Naive thymus-derived CD4-positive, alpha-beta T cell (primary cell): ENCODE measurements at regions of chr21 and their contacts with region 1.

Region 1: GRCh38 chr21:25999921-26000582 is 170.5 kb downstream of the APP start:
- DNase-seq: peak in 8 of 9 donors; percentile 16 to 64 (median 40)
- ATAC-seq: peak; percentile 82
- H3K4me3 ChIP-seq: peak overlapping the region; percentile 12
- H3K4me3 Mint-ChIP-seq: peak overlapping the region; percentile 43 to 73 (median 61)
- H3K27ac ChIP-seq: no peak overlapping the region
- H3K27ac Mint-ChIP-seq: peak overlapping the region in 4 of 9 donors; percentile 4 to 39 (median 18)
- H3K4me1 ChIP-seq: no peaks in the 10 kb centered on the region
- H3K4me1 Mint-ChIP-seq: peaks cover 2 to 18% (median 11%) of the 10 kb centered on the region in 7 donors
- H3K27me3 ChIP-seq: no peaks in the 10 kb centered on the region
- H3K27me3 Mint-ChIP-seq: no peaks in the 10 kb centered on the region

Region 2: DNA sequence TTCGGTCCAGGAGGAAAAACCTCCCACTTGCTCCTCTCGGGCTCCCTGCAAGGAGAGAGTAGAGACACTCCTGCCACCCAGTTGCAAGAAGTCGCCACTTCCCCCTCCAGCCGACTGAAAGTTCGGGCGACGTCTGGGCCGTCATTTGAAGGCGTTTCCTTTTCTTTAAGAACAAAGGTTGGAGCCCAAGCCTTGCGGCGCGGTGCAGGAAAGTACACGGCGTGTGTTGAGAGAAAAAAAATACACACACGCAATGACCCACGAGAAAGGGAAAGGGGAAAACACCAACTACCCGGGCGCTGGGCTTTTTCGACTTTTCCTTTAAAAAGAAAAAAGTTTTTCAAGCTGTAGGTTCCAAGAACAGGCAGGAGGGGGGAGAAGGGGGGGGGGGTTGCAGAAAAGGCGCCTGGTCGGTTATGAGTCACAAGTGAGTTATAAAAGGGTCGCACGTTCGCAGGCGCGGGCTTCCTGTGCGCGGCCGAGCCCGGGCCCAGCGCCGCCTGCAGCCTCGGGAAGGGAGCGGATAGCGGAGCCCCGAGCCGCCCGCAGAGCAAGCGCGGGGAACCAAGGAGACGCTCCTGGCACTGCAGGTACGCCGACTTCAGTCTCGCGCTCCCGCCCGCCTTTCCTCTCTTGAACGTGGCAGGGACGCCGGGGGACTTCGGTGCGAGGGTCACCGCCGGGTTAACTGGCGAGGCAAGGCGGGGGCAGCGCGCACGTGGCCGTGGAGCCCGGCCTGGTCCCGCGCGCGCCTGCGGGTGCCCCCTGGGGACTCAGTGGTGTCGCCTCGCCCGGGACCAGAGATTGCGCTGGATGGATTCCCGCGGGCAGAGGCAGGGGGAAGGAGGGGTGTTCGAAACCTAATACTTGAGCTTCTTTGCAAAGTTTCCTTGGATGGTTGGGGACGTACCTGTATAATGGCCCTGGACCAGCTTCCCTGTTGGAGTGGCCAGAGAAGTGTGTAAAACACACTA is 438.1 kb before region 1 on chr21:
- CTCF ChIA-PET with region 1: no interaction called
- POLR2A ChIA-PET with region 1: no interaction called
- intact Hi-C with region 1: no loop called
- DNase-seq: peak; percentile 12 to 93 (median 43)
- ATAC-seq: peak; percentile 74
- H3K4me3 ChIP-seq: peak overlapping the region; percentile 34
- H3K4me3 Mint-ChIP-seq: peak overlapping the region; percentile 88 to 98 (median 94)
- H3K27ac ChIP-seq: peak overlapping the region; percentile 61
- H3K27ac Mint-ChIP-seq: peak overlapping the region; percentile 69 to 96 (median 92)
- H3K4me1 ChIP-seq: peaks cover 11 to 29% of the 10 kb centered on the region in 2 donors
- H3K4me1 Mint-ChIP-seq: peaks cover 27 to 68% (median 50%) of the 10 kb centered on the region in 7 donors
- H3K27me3 ChIP-seq: no peaks in the 10 kb centered on the region
- H3K27me3 Mint-ChIP-seq: no peaks in the 10 kb centered on the region

Region 3: DNA sequence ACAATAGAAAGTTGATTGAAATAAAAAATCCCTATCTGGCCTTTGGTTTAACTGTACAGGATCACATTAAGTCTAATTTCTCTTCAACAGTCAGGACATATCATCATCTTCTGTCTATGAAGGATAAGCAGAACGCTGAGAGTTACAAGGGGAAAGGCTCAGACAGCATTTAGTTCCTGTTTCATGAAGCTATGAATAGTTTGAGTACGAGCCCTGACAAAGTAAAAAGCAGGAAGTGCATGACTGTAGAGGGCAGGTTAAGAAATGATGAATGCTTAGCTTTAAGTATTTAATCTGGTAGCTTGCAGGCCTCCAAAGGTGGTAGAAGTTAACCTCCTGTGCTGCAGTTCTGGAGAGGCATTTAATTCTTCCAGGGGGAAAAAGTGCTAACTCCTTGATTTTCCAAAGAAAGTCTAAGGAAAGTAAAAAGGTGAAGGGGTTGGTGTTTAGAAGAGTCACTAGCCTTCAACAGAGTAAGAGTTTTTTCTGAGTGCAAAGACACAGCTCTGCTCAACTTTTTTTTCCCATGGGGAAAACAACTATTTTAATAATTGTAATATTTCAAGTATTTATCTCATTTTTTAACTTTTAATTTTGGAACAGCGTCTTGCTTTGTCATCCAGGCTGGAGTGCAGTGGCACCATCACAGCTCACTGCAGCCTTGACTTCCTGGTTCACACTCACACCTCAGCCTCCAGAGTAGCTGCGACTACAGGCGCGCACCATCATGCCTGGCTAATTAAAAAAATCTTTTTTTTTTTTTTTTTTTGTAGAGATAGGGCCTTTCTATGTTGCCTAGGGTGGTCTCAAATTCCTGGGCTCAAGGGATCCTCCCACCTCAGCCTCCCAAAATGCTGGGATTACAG is 32.2 kb before region 1 on chr21:
- CTCF ChIA-PET with region 1: no interaction called
- POLR2A ChIA-PET with region 1: no interaction called
- intact Hi-C with region 1: loop called in 1 of 2 experiments (anchors 5 kb)
- DNase-seq: peak in 6 of 9 donors; percentile 4 to 41 (median 20)
- ATAC-seq: peak; percentile 84
- H3K4me3 ChIP-seq: no peak overlapping the region
- H3K4me3 Mint-ChIP-seq: peak overlapping the region in 7 of 10 donors; percentile 50 to 68 (median 65)
- H3K27ac ChIP-seq: peak overlapping the region; percentile 51
- H3K27ac Mint-ChIP-seq: peak overlapping the region; percentile 67 to 86 (median 82)
- H3K4me1 ChIP-seq: no peaks in the 10 kb centered on the region
- H3K4me1 Mint-ChIP-seq: peaks cover 5 to 19% (median 14%) of the 10 kb centered on the region in 7 donors
- H3K27me3 ChIP-seq: no peaks in the 10 kb centered on the region
- H3K27me3 Mint-ChIP-seq: no peaks in the 10 kb centered on the region